Motor neuron (in vitro differentiated cells): ENCODE measurements at regions of chr4 and their contacts with region 1.

Region 1: DNA sequence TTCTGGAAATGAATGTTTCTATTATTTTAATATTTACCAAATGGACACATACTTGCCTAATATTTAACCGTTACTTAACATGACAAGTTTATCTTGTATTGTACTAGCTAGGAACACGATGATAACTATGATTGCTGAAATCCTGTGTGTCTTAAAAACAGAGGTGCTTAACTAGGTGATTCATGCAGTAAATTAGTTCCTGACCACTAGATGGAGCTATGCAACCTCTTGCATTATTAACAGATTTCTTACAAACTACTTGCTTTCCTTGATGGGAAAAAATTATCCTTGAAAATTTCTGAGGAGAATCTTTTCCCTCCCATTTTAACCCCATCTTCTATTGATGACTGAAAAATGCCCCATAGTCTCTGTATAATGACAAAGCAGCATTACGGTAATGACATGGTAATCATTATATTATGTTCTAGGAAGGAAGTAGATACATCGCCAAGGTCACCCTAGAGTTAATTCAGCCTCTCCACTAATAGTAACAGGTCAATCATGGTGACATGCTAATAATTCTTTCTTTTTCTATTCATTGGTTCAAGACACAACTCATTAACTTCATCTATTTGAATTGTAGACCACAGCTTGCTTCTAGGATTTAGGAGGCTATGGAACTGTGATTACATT is 844.2 kb downstream of the RAPGEF2 start:
- ATAC-seq: peak in 5 of 8 experiments; percentile 31 to 57 (median 40)
- H3K4me3 ChIP-seq: no peak overlapping the region
- H3K27ac ChIP-seq: no peak overlapping the region
- H3K4me1 ChIP-seq: no peaks in the 10 kb centered on the region

Region 2: DNA sequence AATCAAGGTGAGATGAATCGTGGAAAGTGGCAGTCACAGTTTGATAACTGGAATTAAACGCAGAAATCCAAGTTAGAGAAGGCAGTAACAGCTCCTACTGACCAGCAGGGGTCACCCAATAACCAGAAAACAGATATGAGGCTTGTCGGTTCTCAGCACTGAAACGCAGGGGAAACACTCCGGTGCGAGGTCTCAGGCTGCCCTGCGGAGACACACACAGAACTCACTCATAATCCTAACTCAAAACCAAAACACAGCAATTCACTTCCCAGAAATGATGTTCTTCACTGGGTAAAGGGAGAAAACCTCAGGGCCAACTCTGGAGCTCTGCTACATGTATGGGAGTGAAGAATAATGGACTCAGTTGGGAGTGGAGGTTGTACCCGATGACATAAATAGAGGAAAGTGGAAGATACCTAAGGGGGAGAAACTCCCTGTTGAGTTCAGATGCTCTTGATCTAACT is 459.8 kb before region 1 on chr4:
- in situ Hi-C with region 1: loop called in 1 of 9 experiments (anchors 25 kb)
- ATAC-seq: peak; percentile 59 to 97 (median 89)
- H3K4me3 ChIP-seq: no peak overlapping the region
- H3K27ac ChIP-seq: no peak overlapping the region
- H3K4me1 ChIP-seq: no peaks in the 10 kb centered on the region